ENCODE measurements at regions of chr4 and their contacts with region 1.

Region 1: GRCh38 chr4:112523764-112524505 is 8.0 kb upstream of the NEUROG2 start:
- DNase-seq: peak; percentile 90
- H3K4me3 Mint-ChIP-seq: peak overlapping the region; percentile 75
- H3K27ac Mint-ChIP-seq: no peak overlapping the region
- H3K4me1 Mint-ChIP-seq: peaks cover 31% of the 10 kb centered on the region
- H3K27me3 Mint-ChIP-seq: peaks cover 45% of the 10 kb centered on the region

Region 2: DNA sequence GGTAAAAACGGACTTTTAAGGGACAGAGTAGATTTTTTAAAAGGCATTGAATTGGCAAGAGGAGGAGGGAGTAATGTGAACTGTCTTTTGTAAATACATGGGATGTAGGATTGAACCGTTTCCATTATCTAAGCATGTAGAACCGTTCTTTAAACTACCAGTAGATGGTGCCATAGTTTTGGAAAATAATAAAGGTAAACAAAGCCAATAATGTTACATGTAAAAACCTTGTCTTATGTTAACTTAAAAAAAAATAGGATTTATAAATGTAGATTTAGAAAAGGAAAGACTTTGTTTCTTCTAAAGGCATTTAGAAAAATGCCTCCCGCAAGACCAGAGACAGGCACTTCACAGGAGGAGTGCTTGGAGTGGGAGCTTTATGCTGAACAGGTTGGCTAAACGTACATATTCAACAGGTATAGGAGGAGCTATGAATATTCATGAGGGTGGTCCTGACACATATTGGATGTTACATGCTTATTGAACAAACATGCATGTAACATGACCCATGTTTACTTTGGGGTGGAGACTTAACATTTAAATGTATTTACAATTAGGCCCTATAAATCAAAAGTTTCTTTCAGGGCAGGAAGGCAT is 424.1 kb before region 1 on chr4:
- CTCF ChIA-PET with region 1: interaction called, 19 read pairs
- intact Hi-C with region 1: loop called (anchors 1 kb)
- DNase-seq: no peak
- H3K4me3 Mint-ChIP-seq: no peak overlapping the region
- H3K27ac Mint-ChIP-seq: no peak overlapping the region
- H3K4me1 Mint-ChIP-seq: peaks cover 5% of the 10 kb centered on the region
- H3K27me3 Mint-ChIP-seq: peaks cover 3% of the 10 kb centered on the region

Region 3: DNA sequence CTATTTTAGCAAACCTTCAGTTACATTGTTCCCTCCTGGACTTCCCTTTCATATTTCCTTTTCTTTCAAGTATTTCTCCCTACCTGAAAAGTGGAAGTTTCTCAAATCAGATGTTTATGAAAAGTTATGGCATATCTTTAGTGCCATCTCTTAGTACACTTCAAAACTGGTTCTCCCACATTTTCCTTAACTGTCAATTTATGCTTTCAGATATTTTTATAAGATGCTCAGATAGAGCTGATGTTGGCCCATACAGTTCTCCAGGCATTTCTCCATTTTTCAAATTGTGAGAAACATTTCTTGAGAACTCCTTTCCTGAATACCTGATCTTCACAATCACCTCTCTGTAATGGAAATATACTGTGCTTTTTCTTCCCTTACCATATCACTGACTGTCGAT is 324.9 kb before region 1 on chr4:
- CTCF ChIA-PET with region 1: interaction called, 5 read pairs
- intact Hi-C with region 1: loop called (anchors 1 kb)
- DNase-seq: no peak
- H3K4me3 Mint-ChIP-seq: no peak overlapping the region
- H3K27ac Mint-ChIP-seq: no peak overlapping the region
- H3K4me1 Mint-ChIP-seq: peaks cover 21% of the 10 kb centered on the region
- H3K27me3 Mint-ChIP-seq: peaks cover 10% of the 10 kb centered on the region

Region 4: DNA sequence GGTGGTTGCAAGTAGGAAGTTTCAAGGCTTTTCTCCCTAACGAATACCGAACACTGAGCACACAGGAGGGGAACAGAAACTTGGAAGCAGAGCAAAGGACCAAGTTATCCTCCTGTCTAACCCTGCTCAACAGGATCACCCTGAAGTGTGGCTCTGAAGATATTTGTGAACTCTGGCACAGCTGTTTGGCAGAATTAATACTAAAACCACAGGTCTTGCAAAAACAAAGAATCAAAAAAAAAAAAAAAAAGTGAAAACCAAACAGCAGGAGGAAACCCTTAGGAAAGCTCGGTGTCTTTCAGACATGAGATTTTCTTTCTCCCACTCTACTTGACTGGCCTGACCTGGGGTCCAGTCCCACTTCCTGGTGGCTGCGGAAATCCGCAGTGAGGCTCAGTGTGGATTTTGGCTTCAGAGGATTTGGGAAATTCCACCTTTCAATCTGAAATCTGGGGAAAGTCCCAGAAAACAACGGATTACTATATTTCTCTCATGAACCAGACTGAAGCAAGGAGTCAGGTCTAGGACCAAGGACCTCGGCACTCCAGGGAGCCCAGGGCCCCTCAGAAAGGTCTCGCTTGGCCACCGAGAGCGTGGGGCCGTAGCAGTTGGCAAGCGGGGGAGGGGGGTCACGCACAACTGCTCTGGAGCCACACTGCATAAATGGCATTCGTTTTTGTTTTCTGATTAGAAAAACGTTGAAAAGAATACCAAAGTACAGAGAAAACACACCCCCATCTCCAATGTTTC is 239.1 kb before region 1 on chr4:
- CTCF ChIA-PET with region 1: interaction called, 3 read pairs
- intact Hi-C with region 1: loop called (anchors 1 kb)
- DNase-seq: no peak
- H3K4me3 Mint-ChIP-seq: peak overlapping the region; percentile 97
- H3K27ac Mint-ChIP-seq: peak overlapping the region; percentile 97
- H3K4me1 Mint-ChIP-seq: peaks cover 72% of the 10 kb centered on the region
- H3K27me3 Mint-ChIP-seq: no peaks in the 10 kb centered on the region

Region 5: DNA sequence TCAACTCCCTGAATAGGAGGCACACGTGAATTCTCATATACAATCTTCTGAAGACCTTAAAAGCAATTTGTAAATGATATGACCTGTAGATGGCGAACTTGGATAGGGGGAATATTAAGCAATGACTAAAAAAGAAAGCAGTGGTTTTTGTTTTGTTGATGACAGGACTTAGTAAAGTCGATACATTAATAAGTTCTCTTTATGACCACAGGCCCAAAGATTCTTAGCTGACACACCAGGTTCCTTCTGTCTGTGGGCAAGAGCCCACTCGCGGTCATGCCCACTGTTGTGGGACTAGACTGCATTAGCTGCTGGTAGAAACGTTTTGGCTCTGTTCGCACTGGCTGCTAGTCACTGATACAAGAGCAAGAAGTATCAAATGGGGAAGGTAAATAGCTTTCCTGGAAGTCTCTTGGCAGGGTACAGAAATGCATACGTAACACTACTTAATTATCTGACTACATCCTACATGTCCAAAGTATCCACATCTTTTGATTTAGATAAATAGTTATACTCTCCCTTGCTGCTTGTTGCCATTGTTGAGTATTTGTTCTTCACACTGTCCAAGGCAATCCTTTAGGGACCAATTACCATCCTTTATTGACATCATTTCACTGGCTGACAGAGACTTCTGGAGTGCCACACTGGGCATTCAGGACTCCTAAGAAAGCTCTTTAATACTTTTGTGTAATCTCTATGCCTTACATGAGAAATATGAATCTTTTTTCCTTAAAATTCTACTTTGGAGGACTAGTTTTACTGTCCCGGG is 195.8 kb before region 1 on chr4:
- CTCF ChIA-PET with region 1: interaction called, 16 read pairs
- intact Hi-C with region 1: loop called (anchors 1 kb)
- DNase-seq: no peak
- H3K4me3 Mint-ChIP-seq: no peak overlapping the region
- H3K27ac Mint-ChIP-seq: no peak overlapping the region
- H3K4me1 Mint-ChIP-seq: no peaks in the 10 kb centered on the region
- H3K27me3 Mint-ChIP-seq: no peaks in the 10 kb centered on the region

Region 6: GRCh38 chr4:112403081-112403945 is 120.6 kb before region 1 on chr4:
- CTCF ChIA-PET with region 1: no interaction called
- intact Hi-C with region 1: no loop called
- DNase-seq: no peak
- H3K4me3 Mint-ChIP-seq: no peak overlapping the region
- H3K27ac Mint-ChIP-seq: no peak overlapping the region
- H3K4me1 Mint-ChIP-seq: no peaks in the 10 kb centered on the region
- H3K27me3 Mint-ChIP-seq: no peaks in the 10 kb centered on the region

Region 7: GRCh38 chr4:112418092-112418491 is 105.8 kb before region 1 on chr4:
- CTCF ChIA-PET with region 1: no interaction called
- intact Hi-C with region 1: no loop called
- DNase-seq: no peak
- H3K4me3 Mint-ChIP-seq: no peak overlapping the region
- H3K27ac Mint-ChIP-seq: no peak overlapping the region
- H3K4me1 Mint-ChIP-seq: no peaks in the 10 kb centered on the region
- H3K27me3 Mint-ChIP-seq: no peaks in the 10 kb centered on the region

Measured in activated naive CD4-positive, alpha-beta T cell treated with anti-CD3 and anti-CD28 coated beads for 36 hours (primary cell).